MCF 10A (cell line): ENCODE measurements at regions of chr1 and their contacts with region 1.

Region 1: GRCh38 chr1:206479183-206480125 is 9.2 kb downstream of the IKBKE start:
- DNase-seq: peak; percentile 93
- H3K4me3 Mint-ChIP-seq: no peak overlapping the region
- H3K27ac Mint-ChIP-seq: no peak overlapping the region
- H3K4me1 Mint-ChIP-seq: peaks cover 29% of the 10 kb centered on the region
- H3K27me3 Mint-ChIP-seq: no peaks in the 10 kb centered on the region
- CTCF ChIP-seq: peak; percentile 97

Region 2: GRCh38 chr1:206430031-206430983 is 49.1 kb before region 1 on chr1:
- CTCF ChIA-PET with region 1: interaction called, 13 read pairs
- POLR2A ChIA-PET with region 1: no interaction called
- intact Hi-C with region 1: no loop called
- DNase-seq: peak; percentile 83
- H3K4me3 Mint-ChIP-seq: no peak overlapping the region
- H3K27ac Mint-ChIP-seq: peak overlapping the region; percentile 90
- H3K4me1 Mint-ChIP-seq: peaks cover 30% of the 10 kb centered on the region
- H3K27me3 Mint-ChIP-seq: no peaks in the 10 kb centered on the region
- CTCF ChIP-seq: peak; percentile 12

Region 3: DNA sequence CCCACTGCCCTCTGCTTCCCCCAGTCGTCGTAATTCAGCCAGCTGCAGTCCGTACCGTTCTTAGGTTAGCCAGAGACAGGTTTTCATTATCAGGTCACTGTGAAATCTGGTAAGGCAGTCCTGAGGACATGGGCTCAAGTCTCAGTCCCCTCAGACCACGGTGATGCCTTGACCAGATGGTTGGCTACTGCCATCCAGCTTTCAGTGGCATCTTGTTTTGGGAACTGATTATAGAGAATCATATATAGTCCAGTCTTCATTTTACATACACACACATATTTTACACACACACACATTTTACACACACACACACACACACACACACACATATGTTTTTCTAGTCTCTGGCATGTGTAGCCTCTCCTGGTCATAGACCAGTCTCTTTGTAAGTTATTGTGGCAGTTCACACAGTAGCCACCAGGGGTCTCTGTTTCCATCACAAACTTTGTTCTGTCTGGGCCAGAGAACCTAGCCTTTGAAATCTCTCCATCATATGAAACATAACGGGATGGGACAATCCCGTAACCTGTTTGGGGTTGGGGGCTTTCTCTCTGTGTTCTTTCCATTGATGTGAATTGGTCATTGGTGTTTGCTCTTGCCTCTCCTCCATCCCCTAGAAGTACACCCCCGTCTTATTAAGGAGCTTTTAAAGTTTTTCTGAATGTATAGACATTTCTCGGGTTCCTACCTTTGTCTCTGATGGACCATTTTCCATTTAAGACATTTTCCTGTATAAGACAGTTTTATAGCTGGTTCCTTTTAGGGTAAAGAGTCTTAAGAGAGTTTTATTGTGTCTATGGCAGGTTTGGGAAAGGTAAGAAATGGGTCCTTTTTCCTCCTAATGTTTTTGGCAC is 17.6 kb before region 1 on chr1:
- CTCF ChIA-PET with region 1: interaction called, 254 read pairs
- POLR2A ChIA-PET with region 1: interaction called, 6 read pairs
- intact Hi-C with region 1: loop called (anchors 1 kb)
- DNase-seq: peak; percentile 89
- H3K4me3 Mint-ChIP-seq: no peak overlapping the region
- H3K27ac Mint-ChIP-seq: peak overlapping the region; percentile 16
- H3K4me1 Mint-ChIP-seq: peaks cover 30% of the 10 kb centered on the region
- H3K27me3 Mint-ChIP-seq: peaks cover 8% of the 10 kb centered on the region
- CTCF ChIP-seq: peak; percentile 98

Region 4: DNA sequence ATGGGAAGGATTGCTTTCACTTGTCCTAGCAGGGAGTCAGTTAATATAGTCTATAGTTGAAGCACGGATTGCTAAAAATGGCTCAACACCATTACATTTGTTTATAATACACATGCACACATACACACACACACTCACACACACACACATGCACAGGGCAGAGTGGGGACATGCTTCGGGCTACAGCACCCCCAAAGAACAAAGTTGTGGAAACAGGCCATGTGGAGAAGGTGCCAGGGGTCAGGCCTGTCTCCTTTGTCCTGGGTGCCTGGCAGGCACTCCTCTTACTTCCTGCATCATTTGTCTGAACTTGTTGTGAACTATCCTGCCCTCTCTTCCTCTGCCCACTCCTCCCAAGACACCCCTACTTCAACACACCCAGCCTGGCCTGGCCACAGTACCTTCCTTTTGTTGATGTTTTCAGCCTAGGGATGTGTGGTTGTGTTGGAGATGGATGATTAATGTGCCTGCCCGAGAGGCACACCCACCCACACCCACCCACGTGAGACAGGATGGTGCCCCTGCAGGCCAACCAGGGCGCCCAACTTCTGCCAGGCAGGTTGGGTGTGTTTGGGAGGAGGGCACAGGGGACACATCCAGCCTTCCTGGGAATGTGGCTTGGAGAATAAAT is 45.4 kb after region 1 on chr1:
- CTCF ChIA-PET with region 1: interaction called, 11 read pairs
- POLR2A ChIA-PET with region 1: no interaction called
- intact Hi-C with region 1: no loop called
- DNase-seq: peak; percentile 93
- H3K4me3 Mint-ChIP-seq: no peak overlapping the region
- H3K27ac Mint-ChIP-seq: peak overlapping the region; percentile 85
- H3K4me1 Mint-ChIP-seq: peaks cover 18% of the 10 kb centered on the region
- H3K27me3 Mint-ChIP-seq: no peaks in the 10 kb centered on the region
- CTCF ChIP-seq: no peak

Region 5: DNA sequence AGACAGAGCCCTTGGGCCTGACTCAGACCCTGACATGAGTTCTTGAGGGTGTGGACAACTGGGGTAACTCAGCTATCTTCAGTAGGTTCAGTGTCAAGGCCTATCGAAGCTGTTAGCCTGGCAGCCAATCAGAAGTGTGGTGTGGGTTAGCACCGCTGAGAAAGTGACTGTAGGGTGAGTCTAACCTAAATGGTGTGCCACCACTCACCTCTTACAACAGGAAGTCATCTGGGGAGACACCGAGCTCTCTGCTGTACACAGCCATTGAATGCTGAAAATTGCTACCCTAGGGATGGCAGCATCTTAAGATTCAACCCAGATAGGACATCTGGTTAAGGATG is 72.5 kb after region 1 on chr1:
- CTCF ChIA-PET with region 1: interaction called, 17 read pairs
- POLR2A ChIA-PET with region 1: interaction called, 3 read pairs
- intact Hi-C with region 1: no loop called
- DNase-seq: no peak
- H3K4me3 Mint-ChIP-seq: no peak overlapping the region
- H3K27ac Mint-ChIP-seq: no peak overlapping the region
- H3K4me1 Mint-ChIP-seq: no peaks in the 10 kb centered on the region
- H3K27me3 Mint-ChIP-seq: no peaks in the 10 kb centered on the region
- CTCF ChIP-seq: no peak

Region 6: DNA sequence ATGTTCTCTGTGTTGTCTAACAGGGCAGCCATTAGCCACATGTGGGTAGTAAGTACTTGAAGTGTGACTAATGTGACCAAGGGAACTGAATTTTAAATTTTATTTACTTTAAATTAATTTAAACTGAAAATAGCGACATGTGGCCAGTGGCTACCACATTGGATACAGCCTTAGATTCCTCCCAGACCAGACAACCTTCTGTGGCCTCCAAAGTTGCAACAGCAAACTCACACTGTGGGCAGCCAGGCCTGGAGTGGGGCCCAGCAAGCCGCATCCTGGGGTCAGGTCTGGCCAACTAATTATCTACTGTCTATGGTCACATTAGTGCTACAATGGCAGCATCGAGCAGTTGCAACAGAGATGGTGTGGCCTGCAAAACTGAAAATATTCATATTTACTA is 121.1 kb after region 1 on chr1:
- CTCF ChIA-PET with region 1: interaction called, 28 read pairs
- POLR2A ChIA-PET with region 1: interaction called, 5 read pairs
- intact Hi-C with region 1: no loop called
- DNase-seq: no peak
- H3K4me3 Mint-ChIP-seq: no peak overlapping the region
- H3K27ac Mint-ChIP-seq: no peak overlapping the region
- H3K4me1 Mint-ChIP-seq: no peaks in the 10 kb centered on the region
- H3K27me3 Mint-ChIP-seq: no peaks in the 10 kb centered on the region
- CTCF ChIP-seq: no peak